Mammary epithelial cell (primary cell): ENCODE measurements at regions of chr19 and their contacts with region 1.

Region 1: GRCh38 chr19:38880076-38880881 is 2.2 kb upstream of the RINL start:
- DNase-seq: no peak
- H3K4me3 ChIP-seq: no peak overlapping the region
- H3K27ac ChIP-seq: no peak overlapping the region
- H3K4me1 ChIP-seq: peaks cover 9% of the 10 kb centered on the region
- H3K27me3 ChIP-seq: no peaks in the 10 kb centered on the region
- CTCF ChIP-seq: no peak

Region 2: DNA sequence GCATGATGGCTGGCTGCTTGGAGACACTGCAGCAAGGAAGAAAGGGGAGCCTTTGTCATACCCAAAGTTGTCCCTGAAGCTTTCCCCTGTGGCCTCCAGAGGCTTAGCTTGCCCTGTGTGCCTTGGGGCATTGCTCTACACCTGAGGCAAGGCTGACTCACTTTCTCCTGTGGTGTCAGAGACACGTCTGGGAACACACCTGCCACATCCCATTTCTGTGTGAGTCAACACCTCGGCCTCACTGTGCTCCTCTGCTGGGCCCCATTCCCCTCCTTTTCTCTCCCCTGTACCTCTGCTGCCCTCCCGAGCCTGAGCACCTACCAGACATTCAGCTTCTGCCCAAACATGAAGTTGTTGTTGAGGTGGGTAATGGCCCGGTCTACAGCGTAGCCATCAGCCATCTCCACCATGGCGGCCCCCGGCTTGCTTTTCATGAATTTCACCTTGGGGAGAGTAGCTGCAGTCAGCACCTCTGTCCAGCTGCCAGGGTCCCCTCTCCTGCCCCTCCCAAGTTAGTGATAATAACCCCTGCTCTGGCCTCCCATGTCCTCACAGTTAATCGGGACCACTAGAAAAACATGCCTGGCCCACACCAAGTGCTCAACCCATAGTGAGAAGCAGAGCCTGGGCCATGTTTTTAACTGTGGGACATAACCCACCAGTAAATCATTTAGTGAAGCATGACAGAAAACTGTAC is 41.6 kb before region 1 on chr19:
- CTCF ChIA-PET with region 1: no interaction called
- dilution Hi-C with region 1: no loop called
- in situ Hi-C with region 1: no loop called
- intact Hi-C with region 1: no loop called
- DNase-seq: peak; percentile 98
- H3K4me3 ChIP-seq: no peak overlapping the region
- H3K27ac ChIP-seq: peak overlapping the region; percentile 75
- H3K4me1 ChIP-seq: peaks cover 55% of the 10 kb centered on the region
- H3K27me3 ChIP-seq: no peaks in the 10 kb centered on the region
- CTCF ChIP-seq: peak; percentile 53 to 72

Region 3: GRCh38 chr19:38919837-38920601 is 39.7 kb after region 1 on chr19:
- CTCF ChIA-PET with region 1: no interaction called
- dilution Hi-C with region 1: loop called (anchors 5 kb)
- in situ Hi-C with region 1: no loop called
- intact Hi-C with region 1: no loop called
- DNase-seq: no peak
- H3K4me3 ChIP-seq: no peak overlapping the region
- H3K27ac ChIP-seq: no peak overlapping the region
- H3K4me1 ChIP-seq: no peaks in the 10 kb centered on the region
- H3K27me3 ChIP-seq: no peaks in the 10 kb centered on the region
- CTCF ChIP-seq: no peak